ENCODE measurements at regions of chr2 and their contacts with region 1.

Region 1: GRCh38 chr2:30072250-30072842 is 74.5 kb upstream of the YPEL5 start:
- DNase-seq: peak; percentile 16
- ATAC-seq: peak; percentile 99
- H3K4me3 ChIP-seq: no peak overlapping the region
- H3K27ac ChIP-seq: no peak overlapping the region
- H3K4me1 ChIP-seq: no peaks in the 10 kb centered on the region
- H3K27me3 ChIP-seq: peaks cover 1 to 4% of the 10 kb centered on the region in 2 experiments; a peak in 3 of 4 replicates
- CTCF ChIP-seq: peak; percentile 75 to 83 (median 80)
- EP300 ChIP-seq: no peak
- POLR2A ChIP-seq: no peak
- RAD21 ChIP-seq: peak; percentile 80

Region 2: GRCh38 chr2:28958689-28959088 is 1113.7 kb before region 1 on chr2:
- CTCF ChIA-PET with region 1: no interaction called
- POLR2A ChIA-PET with region 1: no interaction called
- RAD21 ChIA-PET with region 1: no interaction called
- SMC1A ChIA-PET with region 1: no interaction called
- in situ Hi-C with region 1: loop called (anchors 10 kb)
- intact Hi-C with region 1: loop called (anchors 1 kb)
- DNase-seq: peak; percentile 25
- ATAC-seq: peak; percentile 91
- H3K4me3 ChIP-seq: no peak overlapping the region
- H3K27ac ChIP-seq: no peak overlapping the region
- H3K4me1 ChIP-seq: no peaks in the 10 kb centered on the region
- H3K27me3 ChIP-seq: no peaks in the 10 kb centered on the region
- CTCF ChIP-seq: peak; percentile 47 to 74 (median 68); a peak in 5 of 6 replicates
- EP300 ChIP-seq: no peak
- POLR2A ChIP-seq: no peak
- RAD21 ChIP-seq: peak; percentile 95

Region 3: DNA sequence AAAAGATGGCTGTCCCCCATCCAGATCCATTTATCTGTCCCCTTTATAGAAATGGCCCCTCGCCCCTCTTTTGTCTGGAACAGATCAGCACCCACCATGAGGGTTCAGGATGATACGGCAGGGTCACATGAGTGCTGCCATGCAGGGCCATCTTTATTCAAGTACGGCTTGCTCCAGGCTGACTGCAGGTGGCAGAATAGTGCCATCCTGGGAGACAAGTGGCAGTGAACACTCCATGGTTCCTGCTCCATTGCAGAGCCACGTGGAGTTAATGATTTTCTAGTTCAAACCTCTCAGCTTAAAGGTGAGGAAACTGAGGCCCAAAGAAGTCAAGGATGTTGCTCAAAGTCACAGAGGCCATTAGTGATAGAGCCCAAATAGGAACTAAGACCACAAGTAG is 776.5 kb before region 1 on chr2:
- CTCF ChIA-PET with region 1: no interaction called
- POLR2A ChIA-PET with region 1: no interaction called
- RAD21 ChIA-PET with region 1: no interaction called
- SMC1A ChIA-PET with region 1: no interaction called
- in situ Hi-C with region 1: no loop called
- intact Hi-C with region 1: loop called (anchors 5 kb)
- DNase-seq: no peak
- ATAC-seq: peak; percentile 46; the same call in 2 of the 3 replicates
- H3K4me3 ChIP-seq: no peak overlapping the region
- H3K27ac ChIP-seq: no peak overlapping the region
- H3K4me1 ChIP-seq: no peaks in the 10 kb centered on the region
- H3K27me3 ChIP-seq: peaks cover 0 to 5% of the 10 kb centered on the region in 2 experiments; a peak in 2 of 4 replicates
- CTCF ChIP-seq: peak; percentile 21 to 44 (median 37); a peak in 5 of 6 replicates
- EP300 ChIP-seq: no peak
- POLR2A ChIP-seq: no peak
- RAD21 ChIP-seq: peak; percentile 37

Region 4: GRCh38 chr2:29916571-29916970 is 155.8 kb before region 1 on chr2:
- CTCF ChIA-PET with region 1: interaction called, 58 read pairs
- POLR2A ChIA-PET with region 1: no interaction called
- RAD21 ChIA-PET with region 1: interaction called, 26 read pairs
- SMC1A ChIA-PET with region 1: interaction called, 24 read pairs
- in situ Hi-C with region 1: loop called (anchors 5 kb)
- intact Hi-C with region 1: no loop called
- DNase-seq: no peak
- ATAC-seq: no peak
- H3K4me3 ChIP-seq: no peak overlapping the region
- H3K27ac ChIP-seq: no peak overlapping the region
- H3K4me1 ChIP-seq: no peaks in the 10 kb centered on the region
- H3K27me3 ChIP-seq: peaks cover 4 to 5% of the 10 kb centered on the region in 2 experiments
- CTCF ChIP-seq: no peak
- EP300 ChIP-seq: no peak
- POLR2A ChIP-seq: no peak
- RAD21 ChIP-seq: no peak

Region 5: GRCh38 chr2:30098266-30099005 is 26.1 kb after region 1 on chr2:
- CTCF ChIA-PET with region 1: no interaction called
- POLR2A ChIA-PET with region 1: no interaction called
- RAD21 ChIA-PET with region 1: no interaction called
- SMC1A ChIA-PET with region 1: no interaction called
- in situ Hi-C with region 1: no loop called
- intact Hi-C with region 1: no loop called
- DNase-seq: no peak
- ATAC-seq: no peak
- H3K4me3 ChIP-seq: no peak overlapping the region
- H3K27ac ChIP-seq: no peak overlapping the region
- H3K4me1 ChIP-seq: no peaks in the 10 kb centered on the region
- H3K27me3 ChIP-seq: peaks cover 0 to 6% of the 10 kb centered on the region in 2 experiments; a peak in 1 of 4 replicates
- CTCF ChIP-seq: no peak
- EP300 ChIP-seq: no peak
- POLR2A ChIP-seq: no peak
- RAD21 ChIP-seq: no peak

Measured in GM12878 (cell line).